ENCODE measurements at regions of chr1 and their contacts with region 1.

Region 1: DNA sequence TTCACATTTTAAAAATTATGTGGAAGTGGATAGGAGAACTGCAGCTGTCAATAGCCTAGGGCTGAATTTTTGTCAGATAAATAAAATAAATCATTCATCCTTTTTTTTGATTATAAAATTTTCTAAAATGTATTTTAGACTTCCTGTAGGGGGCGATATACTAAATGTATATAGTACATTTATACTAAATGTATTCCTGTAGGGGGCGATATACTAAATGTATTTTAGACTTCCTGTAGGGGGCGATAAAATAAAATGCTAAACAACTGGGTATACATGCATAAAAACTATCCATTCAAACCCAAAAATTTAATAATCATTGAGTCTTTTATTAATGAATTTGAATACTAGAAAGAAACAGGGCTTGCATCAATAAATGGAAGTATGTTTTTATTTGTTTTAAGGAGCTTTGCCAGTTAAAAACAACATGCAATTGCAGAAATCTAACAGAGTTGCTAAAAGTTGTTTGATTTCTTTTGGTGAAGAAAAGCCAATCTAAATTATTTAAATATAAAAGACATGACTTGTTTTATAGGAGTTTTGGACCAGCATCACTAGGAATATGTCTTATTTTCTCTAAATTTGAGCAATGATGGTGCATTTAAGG is 31.4 kb downstream of the CLCA1 start:
- DNase-seq: peak in 2 of 9 experiments; percentile 43 to 60
- ATAC-seq: peak; percentile 63
- H3K4me3 ChIP-seq: no peak overlapping the region
- H3K4me3 Mint-ChIP-seq: no peak overlapping the region
- H3K27ac ChIP-seq: no peak overlapping the region
- H3K27ac Mint-ChIP-seq: no peak overlapping the region
- H3K4me1 ChIP-seq: peaks cover 7% of the 10 kb centered on the region
- H3K4me1 Mint-ChIP-seq: peaks cover 8% of the 10 kb centered on the region
- H3K27me3 ChIP-seq: peaks cover 0 to 2% of the 10 kb centered on the region in 2 experiments
- H3K27me3 Mint-ChIP-seq: peaks cover 10% of the 10 kb centered on the region
- CTCF ChIP-seq: peak; percentile 100

Region 2: GRCh38 chr1:85307987-85308832 is 1191.9 kb before region 1 on chr1:
- CTCF ChIA-PET with region 1: no interaction called
- POLR2A ChIA-PET with region 1: no interaction called
- intact Hi-C with region 1: no loop called
- DNase-seq: peak; percentile 19 to 74 (median 65)
- ATAC-seq: peak; percentile 90
- H3K4me3 ChIP-seq: no peak overlapping the region
- H3K4me3 Mint-ChIP-seq: peak overlapping the region; percentile 65
- H3K27ac ChIP-seq: no peak overlapping the region
- H3K27ac Mint-ChIP-seq: no peak overlapping the region
- H3K4me1 ChIP-seq: peaks cover 4% of the 10 kb centered on the region
- H3K4me1 Mint-ChIP-seq: peaks cover 5% of the 10 kb centered on the region
- H3K27me3 ChIP-seq: no peaks in the 10 kb centered on the region
- H3K27me3 Mint-ChIP-seq: peaks cover 35% of the 10 kb centered on the region
- CTCF ChIP-seq: peak; percentile 68

Region 3: DNA sequence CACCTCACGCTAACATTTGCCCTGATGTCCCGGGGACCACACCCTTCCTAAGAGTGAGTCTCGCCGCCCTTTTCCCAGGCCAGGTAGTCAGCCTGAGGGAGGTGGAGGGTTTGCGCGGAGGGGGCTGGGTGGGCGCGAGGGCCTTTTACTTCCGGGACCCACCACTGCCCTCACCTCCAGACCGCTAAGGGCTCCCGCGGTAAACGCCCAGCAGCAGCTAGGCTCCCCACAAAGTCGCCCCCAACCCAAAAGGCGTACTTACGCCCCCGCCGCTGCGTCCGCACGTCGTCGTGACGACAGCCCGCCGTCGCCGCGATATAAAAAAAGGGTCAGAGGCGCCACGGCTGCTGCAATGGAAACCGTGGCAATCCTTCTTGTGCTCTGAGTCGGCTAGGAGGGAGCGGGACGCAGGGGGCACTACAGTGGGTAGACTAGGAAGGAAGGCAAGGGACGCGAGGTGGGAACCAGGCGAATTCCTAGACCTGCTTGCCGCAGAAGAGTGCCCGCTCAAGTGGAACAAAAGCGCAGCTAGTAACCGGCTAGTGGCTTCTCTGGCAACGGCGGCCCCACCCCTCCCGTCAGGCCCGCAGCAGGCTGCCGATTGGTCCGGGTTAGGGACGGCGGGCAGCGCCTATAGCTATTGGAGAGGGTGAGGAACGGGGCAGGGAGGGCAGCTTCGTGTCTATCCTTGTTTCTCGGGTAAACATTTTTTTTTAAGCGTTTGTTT is 104.2 kb before region 1 on chr1 and contains the start of gene ODF2L:
- CTCF ChIA-PET with region 1: interaction called, 5 read pairs
- POLR2A ChIA-PET with region 1: no interaction called
- intact Hi-C with region 1: loop called (anchors 5 kb)
- DNase-seq: peak; percentile 74 to 91 (median 89)
- ATAC-seq: peak; percentile 98
- H3K4me3 ChIP-seq: peak within 1 kb of the TSS; percentile 91 to 97
- H3K4me3 Mint-ChIP-seq: peak within 1 kb of the TSS; percentile 99
- H3K27ac ChIP-seq: peak within 1 kb of the TSS; percentile 85 to 91
- H3K27ac Mint-ChIP-seq: peak within 1 kb of the TSS; percentile 97
- H3K4me1 ChIP-seq: peaks cover 16% of the 10 kb centered on the region
- H3K4me1 Mint-ChIP-seq: peaks cover 53% of the 10 kb centered on the region
- H3K27me3 ChIP-seq: no peaks in the 10 kb centered on the region
- H3K27me3 Mint-ChIP-seq: no peaks in the 10 kb centered on the region
- CTCF ChIP-seq: no peak
- total RNA-seq, gene ODF2L: 49.3 to 49.6 TPM

Region 4: GRCh38 chr1:86470859-86471258 is 29.2 kb before region 1 on chr1:
- CTCF ChIA-PET with region 1: interaction called, 8 read pairs
- POLR2A ChIA-PET with region 1: no interaction called
- intact Hi-C with region 1: loop called in 1 of 2 experiments (anchors 1 kb)
- DNase-seq: no peak
- ATAC-seq: no peak
- H3K4me3 ChIP-seq: no peak overlapping the region
- H3K4me3 Mint-ChIP-seq: no peak overlapping the region
- H3K27ac ChIP-seq: no peak overlapping the region
- H3K27ac Mint-ChIP-seq: no peak overlapping the region
- H3K4me1 ChIP-seq: no peaks in the 10 kb centered on the region
- H3K4me1 Mint-ChIP-seq: no peaks in the 10 kb centered on the region
- H3K27me3 ChIP-seq: peaks cover 0 to 3% of the 10 kb centered on the region in 2 experiments
- H3K27me3 Mint-ChIP-seq: peaks cover 13% of the 10 kb centered on the region
- CTCF ChIP-seq: no peak

Region 5: DNA sequence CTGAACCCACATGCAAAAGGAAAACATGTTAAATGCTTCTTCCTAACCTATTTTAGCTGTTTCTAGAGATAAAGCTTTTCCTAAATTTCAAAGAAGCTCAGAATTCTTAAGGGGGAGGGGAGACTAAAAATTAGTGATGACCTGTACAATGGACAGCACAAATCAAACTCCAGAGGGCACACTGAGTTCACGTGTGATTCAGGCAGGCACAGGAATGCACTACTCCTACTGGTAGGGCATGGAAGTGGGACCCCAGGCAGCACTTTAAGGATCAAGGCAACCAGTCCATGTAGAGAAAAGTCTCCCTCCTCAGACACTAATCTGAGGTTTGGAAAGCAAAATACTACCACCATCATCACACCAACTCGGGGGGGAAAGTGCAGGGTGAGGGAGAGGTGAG is 15.5 kb after region 1 on chr1:
- CTCF ChIA-PET with region 1: interaction called, 12 read pairs
- POLR2A ChIA-PET with region 1: no interaction called
- intact Hi-C with region 1: no loop called
- DNase-seq: peak in 1 of 9 experiments; percentile 27
- ATAC-seq: no peak
- H3K4me3 ChIP-seq: no peak overlapping the region
- H3K4me3 Mint-ChIP-seq: no peak overlapping the region
- H3K27ac ChIP-seq: no peak overlapping the region
- H3K27ac Mint-ChIP-seq: no peak overlapping the region
- H3K4me1 ChIP-seq: no peaks in the 10 kb centered on the region
- H3K4me1 Mint-ChIP-seq: no peaks in the 10 kb centered on the region
- H3K27me3 ChIP-seq: no peaks in the 10 kb centered on the region
- H3K27me3 Mint-ChIP-seq: no peaks in the 10 kb centered on the region
- CTCF ChIP-seq: no peak

Region 6: DNA sequence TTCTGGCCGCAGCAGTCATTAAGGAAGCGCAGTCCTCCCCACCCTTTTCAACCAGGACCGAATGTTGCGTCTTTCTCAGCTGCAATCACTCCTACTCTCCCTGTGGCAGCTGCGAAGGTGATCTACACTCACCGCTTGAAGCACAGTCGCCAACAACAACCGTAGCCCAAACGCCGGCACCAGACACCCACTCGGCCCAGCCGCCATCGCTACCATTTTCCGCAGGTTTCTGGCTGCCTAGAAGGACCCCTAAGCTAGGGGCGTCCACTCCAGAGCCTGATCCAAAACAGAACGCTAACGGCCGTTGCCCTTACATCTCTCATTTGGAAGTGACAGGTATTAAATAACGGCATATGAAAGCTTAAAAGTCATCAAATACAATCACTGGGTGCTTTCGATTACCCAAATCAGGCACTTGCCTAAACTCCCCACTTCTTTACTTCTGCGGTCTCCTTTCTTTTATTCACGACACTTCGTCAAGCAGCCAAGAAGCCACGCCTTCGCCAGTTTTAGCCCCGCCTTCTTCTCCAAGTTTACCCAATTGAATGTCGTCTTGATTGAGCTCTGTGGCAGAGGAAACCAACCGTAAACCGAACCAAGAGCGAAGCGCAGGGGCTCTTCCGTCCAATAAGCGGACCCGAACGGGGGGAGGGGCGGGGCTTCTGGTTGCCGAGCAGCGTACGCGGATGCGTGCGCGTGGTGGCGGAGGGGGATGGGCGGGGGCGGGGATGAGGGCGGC is 414.0 kb after region 1 on chr1 and contains the start of gene SELENOF:
- CTCF ChIA-PET with region 1: no interaction called
- POLR2A ChIA-PET with region 1: no interaction called
- intact Hi-C with region 1: loop called in 1 of 2 experiments (anchors 10 kb)
- DNase-seq: peak; percentile 97 to 100 (median 99)
- ATAC-seq: peak; percentile 85
- H3K4me3 ChIP-seq: peak within 1 kb of the TSS; percentile 91 to 99
- H3K4me3 Mint-ChIP-seq: no peak within 1 kb of the TSS
- H3K27ac ChIP-seq: peak within 1 kb of the TSS; percentile 76 to 99
- H3K27ac Mint-ChIP-seq: no peak within 1 kb of the TSS
- H3K4me1 ChIP-seq: peaks cover 35% of the 10 kb centered on the region
- H3K4me1 Mint-ChIP-seq: peaks cover 50% of the 10 kb centered on the region
- H3K27me3 ChIP-seq: no peaks in the 10 kb centered on the region
- H3K27me3 Mint-ChIP-seq: no peaks in the 10 kb centered on the region
- CTCF ChIP-seq: no peak
- total RNA-seq, gene SELENOF: 74.5 to 78.6 TPM

Measured in CD8-positive, alpha-beta T cell (primary cell).